A549 (cell line): ENCODE measurements at regions of chr5 and their contacts with region 1.

Region 1: DNA sequence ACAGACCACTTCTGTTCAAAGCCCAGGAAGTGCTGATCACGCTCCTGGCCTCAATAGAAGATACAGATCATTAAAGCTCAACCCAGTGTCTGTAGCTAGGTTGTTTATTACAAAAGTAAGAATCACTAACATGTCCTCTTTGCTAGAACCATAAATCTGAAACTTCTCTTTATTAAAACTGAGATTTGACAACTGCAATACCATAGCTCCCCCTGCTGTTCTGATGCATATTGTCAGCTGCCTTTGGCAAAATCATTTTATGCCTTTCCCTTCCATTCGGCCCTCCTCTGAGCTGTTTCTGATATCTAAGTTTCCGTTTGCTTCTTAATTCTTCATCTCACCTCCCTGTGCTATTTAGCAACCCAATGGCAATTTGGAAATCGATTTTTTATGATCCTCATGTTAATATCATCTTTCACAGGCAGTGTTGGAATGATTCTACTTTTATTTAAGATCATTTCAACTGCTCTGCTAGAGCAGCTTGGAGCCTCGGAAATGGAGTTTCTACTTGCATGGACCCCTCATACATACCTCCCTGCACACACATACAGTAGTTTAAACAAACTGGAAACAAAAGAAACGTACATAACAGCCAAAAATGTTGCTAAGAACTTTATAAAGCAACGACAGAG is 998.8 kb downstream of the MAT2B start:
- DNase-seq: peak; percentile 8 to 57
- ATAC-seq: peak; percentile 59 to 69; a peak in 3 of 6 replicates
- H3K4me3 ChIP-seq: no peak overlapping the region
- H3K27ac ChIP-seq: no peak overlapping the region
- H3K4me1 ChIP-seq: no peaks in the 10 kb centered on the region
- CTCF ChIP-seq: peak; percentile 79
- EP300 ChIP-seq: no peak
- POLR2A ChIP-seq: no peak
- RAD21 ChIP-seq: peak; percentile 79 to 89

Region 2: GRCh38 chr5:163564321-163564938 is 939.8 kb before region 1 on chr5:
- CTCF ChIA-PET with region 1: interaction called, 31 read pairs
- POLR2A ChIA-PET with region 1: no interaction called
- DNase-seq: peak; percentile 28 to 60
- ATAC-seq: peak in 1 of 2 experiments; percentile 70; a peak in 3 of 6 replicates
- H3K4me3 ChIP-seq: no peak overlapping the region
- H3K27ac ChIP-seq: no peak overlapping the region
- H3K4me1 ChIP-seq: no peaks in the 10 kb centered on the region; the same call in 2 of the 3 replicates
- CTCF ChIP-seq: peak; percentile 87
- EP300 ChIP-seq: no peak
- POLR2A ChIP-seq: no peak
- RAD21 ChIP-seq: peak; percentile 88 to 92

Region 3: DNA sequence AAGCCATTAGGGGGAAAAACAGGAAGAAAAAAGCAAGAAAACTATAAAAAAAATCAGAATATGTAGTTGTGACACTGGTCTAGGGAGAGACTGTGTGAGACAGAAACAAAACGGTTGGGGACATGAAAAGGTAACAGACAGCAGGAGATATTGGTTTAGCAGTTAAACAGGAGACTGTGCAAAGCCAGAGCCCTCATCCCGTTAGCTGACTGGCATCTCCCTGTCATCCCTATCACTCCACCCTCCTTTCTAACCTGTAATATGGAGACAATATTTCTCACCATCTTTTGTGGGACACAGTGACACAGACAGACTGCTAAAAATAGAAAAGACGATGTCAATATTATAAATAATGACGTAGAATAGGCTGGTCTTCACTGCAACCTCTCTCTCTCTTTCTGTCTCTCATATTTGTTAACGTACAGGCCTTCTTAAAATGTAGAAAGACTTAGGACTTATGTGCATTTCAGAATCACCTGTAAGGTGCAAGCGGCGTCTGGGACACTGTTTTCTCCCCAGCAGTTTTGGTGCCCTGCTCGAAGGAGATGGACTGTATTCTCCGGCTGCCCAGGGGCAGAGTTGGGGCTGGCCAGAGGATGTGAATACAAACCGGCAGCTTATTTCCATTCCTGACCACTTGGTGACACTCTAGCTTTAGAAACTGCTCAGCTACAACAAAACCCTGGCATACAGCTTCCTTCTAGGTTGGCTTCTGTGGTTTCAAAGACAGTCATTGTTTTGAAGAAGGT is 808.3 kb before region 1 on chr5:
- CTCF ChIA-PET with region 1: interaction called, 16 read pairs
- POLR2A ChIA-PET with region 1: no interaction called
- DNase-seq: peak; percentile 9 to 48
- ATAC-seq: peak; percentile 99
- H3K4me3 ChIP-seq: no peak overlapping the region
- H3K27ac ChIP-seq: no peak overlapping the region
- H3K4me1 ChIP-seq: no peaks in the 10 kb centered on the region
- CTCF ChIP-seq: peak; percentile 56
- EP300 ChIP-seq: no peak
- POLR2A ChIP-seq: no peak
- RAD21 ChIP-seq: peak; percentile 68 to 77

Region 4: GRCh38 chr5:164013077-164013670 is 491.1 kb before region 1 on chr5:
- CTCF ChIA-PET with region 1: interaction called, 17 read pairs
- POLR2A ChIA-PET with region 1: no interaction called
- DNase-seq: peak; percentile 11 to 75
- ATAC-seq: peak; percentile 68 to 84; a peak in 5 of 6 replicates
- H3K4me3 ChIP-seq: no peak overlapping the region
- H3K27ac ChIP-seq: no peak overlapping the region
- H3K4me1 ChIP-seq: no peaks in the 10 kb centered on the region
- CTCF ChIP-seq: peak; percentile 75
- EP300 ChIP-seq: no peak
- POLR2A ChIP-seq: no peak
- RAD21 ChIP-seq: peak; percentile 83 to 84